Uterus (tissue), 4 donors: ENCODE measurements at regions of chr14 and their contacts with region 1.

Region 1: DNA sequence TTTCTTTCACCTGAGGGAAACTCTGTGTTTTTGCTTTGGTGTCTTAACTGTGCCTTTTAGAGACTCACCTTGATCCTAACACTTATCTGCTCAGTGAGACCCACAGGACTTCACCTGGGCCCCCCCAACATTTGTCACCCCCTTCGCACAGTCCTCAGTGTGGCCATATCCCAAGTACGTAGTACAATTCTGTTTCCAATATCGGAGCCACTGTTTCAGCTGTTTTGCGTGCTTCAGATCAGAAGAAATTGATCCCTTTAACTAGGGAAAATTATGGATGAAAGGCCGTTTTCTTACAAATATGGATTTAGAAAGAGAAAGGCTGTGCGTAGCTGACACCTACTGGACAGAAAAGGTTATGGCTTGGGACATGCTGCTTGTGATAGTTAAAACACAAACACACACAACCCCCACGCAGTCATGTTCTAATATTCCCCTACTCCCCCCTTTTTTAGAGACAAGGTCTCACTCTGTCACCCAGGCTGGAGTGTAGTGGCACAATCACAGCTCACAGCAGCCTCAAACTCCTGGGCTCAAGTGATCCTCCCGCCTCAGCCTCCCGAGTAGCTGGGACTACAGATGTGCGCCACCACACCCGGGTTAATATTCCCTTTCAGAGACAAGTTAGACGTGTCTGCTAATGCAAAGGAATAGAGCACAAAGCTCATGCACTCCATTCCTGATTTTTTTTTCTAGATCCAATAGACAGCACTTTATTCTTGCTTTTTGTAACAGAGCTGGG is 3.6 kb upstream of the SLC7A8 start:
- DNase-seq: peak; percentile 46 to 69
- H3K4me3 ChIP-seq: no peak overlapping the region
- H3K27ac ChIP-seq: no peak overlapping the region
- H3K4me1 ChIP-seq: no peaks in the 10 kb centered on the region
- H3K27me3 ChIP-seq: no peaks in the 10 kb centered on the region
- CTCF ChIP-seq: peak; percentile 84 to 96 (median 92)
- POLR2A ChIP-seq: no peak

Region 2: GRCh38 chr14:23119373-23120327 is 67.4 kb before region 1 on chr14:
- intact Hi-C with region 1: loop called (anchors 2 kb)
- DNase-seq: no peak
- H3K4me3 ChIP-seq: no peak overlapping the region
- H3K27ac ChIP-seq: no peak overlapping the region
- H3K4me1 ChIP-seq: peaks cover 0 to 4% of the 10 kb centered on the region in 2 donors
- H3K27me3 ChIP-seq: no peaks in the 10 kb centered on the region
- CTCF ChIP-seq: no peak
- POLR2A ChIP-seq: no peak